Mucosa of descending colon (tissue), 3 donors: ENCODE measurements at regions of chr11 and their contacts with region 1.

Region 1: DNA sequence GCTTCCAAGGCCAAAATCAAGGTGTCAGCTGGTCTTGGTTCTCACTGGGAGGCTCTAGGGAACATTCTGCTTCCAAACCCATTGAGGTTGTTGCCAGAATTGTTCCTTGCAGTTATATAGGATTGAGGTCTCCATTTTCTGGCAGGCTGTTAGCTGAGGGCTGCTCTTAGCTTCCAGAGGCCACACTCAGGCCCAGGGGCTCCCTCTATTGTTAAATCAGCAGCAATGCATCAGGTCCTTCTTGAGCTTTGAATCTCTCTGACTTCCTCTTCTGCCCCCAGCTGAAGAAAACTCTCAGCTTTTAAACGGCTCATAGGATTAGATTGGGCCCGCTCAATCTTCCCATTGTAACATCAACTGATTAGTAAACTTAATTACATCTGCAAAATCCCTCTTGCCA is 39.3 kb upstream of the BSX start:
- DNase-seq: peak in 1 of 3 donors; percentile 16
- ATAC-seq: peak; percentile 66
- H3K4me3 ChIP-seq: no peak overlapping the region
- H3K4me1 ChIP-seq: no peaks in the 10 kb centered on the region
- CTCF ChIP-seq: peak; percentile 19

Region 2: GRCh38 chr11:122863704-122864326 is 157.2 kb before region 1 on chr11:
- intact Hi-C with region 1: loop called (anchors 5 to 10 kb)
- DNase-seq: peak in 2 of 3 donors; percentile 35 to 64
- ATAC-seq: no peak
- H3K4me3 ChIP-seq: no peak overlapping the region
- H3K4me1 ChIP-seq: no peaks in the 10 kb centered on the region
- CTCF ChIP-seq: peak; percentile 67